BJ (cell line): ENCODE measurements at regions of chr2 and their contacts with region 1.

Region 1: GRCh38 chr2:216651351-216651881 is 18.2 kb downstream of the IGFBP2 start:
- DNase-seq: no peak
- H3K4me3 ChIP-seq: no peak overlapping the region
- H3K27me3 ChIP-seq: no peaks in the 10 kb centered on the region
- CTCF ChIP-seq: no peak

Region 2: DNA sequence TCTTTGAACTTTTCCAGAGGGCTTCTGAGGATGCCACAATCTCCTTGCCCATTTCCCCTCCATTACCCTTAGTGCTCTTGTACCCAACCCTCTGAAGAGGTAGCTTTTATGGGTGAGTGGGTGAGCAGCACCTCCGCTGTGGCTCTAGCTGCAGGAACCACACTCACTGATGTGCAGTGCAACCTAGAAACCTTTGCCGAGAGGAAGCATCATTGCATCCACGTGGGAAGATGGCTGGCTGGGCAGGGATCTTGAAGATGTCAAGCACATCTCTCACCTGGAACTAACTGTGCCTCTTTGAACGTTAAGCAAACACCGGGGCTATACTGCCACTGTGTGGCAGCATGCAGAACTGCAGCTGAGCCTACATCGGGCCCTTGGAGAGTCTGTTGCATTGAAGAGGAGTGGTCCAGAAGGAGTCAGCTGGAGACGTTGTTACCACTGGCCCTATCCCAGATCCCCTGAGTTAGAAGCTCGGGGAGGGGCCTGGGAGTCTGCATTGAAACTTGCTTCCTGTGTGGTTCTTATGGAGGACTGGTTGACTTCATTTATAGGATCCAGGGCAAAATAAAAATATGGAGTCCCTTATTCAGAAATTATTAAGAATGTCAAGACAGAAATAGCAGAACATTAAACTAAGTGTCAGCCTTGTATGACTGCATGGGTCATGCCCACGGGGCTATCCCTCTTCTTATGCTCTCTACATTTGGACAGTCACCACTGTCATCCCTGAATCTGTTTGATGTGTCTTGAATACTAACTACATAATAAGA is 15.2 kb after region 1 on chr2:
- CTCF ChIA-PET with region 1: interaction called, 45 read pairs
- POLR2A ChIA-PET with region 1: no interaction called
- DNase-seq: no peak
- H3K4me3 ChIP-seq: no peak overlapping the region
- H3K27me3 ChIP-seq: no peaks in the 10 kb centered on the region; the same call in 1 of the 2 replicates
- CTCF ChIP-seq: peak; percentile 97

Region 3: GRCh38 chr2:216752855-216753505 is 101.6 kb after region 1 on chr2:
- CTCF ChIA-PET with region 1: no interaction called
- POLR2A ChIA-PET with region 1: no interaction called
- DNase-seq: no peak
- H3K4me3 ChIP-seq: no peak overlapping the region
- H3K27me3 ChIP-seq: peaks cover 15% of the 10 kb centered on the region
- CTCF ChIP-seq: no peak